ENCODE measurements at regions of chr20 and their contacts with region 1.

Region 1: DNA sequence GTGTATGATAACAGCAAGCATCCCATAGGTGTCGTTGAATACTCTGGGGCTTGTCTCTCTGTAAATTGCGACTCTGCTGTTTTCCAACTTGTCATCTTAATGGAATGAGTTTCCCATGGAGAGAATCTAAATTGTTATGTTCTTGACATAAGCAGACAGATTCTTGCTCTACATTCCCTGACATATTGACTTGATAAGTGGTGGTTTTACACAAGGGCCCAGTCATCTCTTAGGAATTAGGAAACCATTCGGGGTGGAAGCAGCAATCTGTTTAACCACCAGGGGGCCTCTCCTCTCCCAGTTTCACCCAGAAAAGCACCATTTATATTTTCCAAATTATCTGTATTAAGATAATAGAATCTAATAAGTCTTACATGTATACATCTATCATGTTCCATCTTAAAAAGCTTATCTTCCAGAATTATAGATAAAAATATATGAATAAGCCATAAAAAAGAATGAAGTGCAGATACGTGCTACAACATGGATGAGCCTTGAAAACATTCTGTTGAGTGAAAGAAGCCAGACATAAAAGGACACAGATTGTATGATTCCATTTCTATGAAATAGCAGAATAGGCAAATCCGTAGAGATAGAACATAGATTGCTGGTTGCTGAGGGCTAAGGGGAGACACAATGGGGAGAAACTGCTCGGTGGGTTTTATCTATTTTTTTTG is 23.1 kb upstream of the MROH8 start:
- DNase-seq: peak; percentile 96
- H3K4me3 ChIP-seq: peak overlapping the region; percentile 47
- CTCF ChIP-seq: peak; percentile 70

Region 2: GRCh38 chr20:37223053-37223452 is 20.6 kb after region 1 on chr20:
- CTCF ChIA-PET with region 1: interaction called, 10 read pairs
- POLR2A ChIA-PET with region 1: no interaction called
- DNase-seq: peak; percentile 80
- H3K4me3 ChIP-seq: no peak overlapping the region
- CTCF ChIP-seq: no peak

Region 3: DNA sequence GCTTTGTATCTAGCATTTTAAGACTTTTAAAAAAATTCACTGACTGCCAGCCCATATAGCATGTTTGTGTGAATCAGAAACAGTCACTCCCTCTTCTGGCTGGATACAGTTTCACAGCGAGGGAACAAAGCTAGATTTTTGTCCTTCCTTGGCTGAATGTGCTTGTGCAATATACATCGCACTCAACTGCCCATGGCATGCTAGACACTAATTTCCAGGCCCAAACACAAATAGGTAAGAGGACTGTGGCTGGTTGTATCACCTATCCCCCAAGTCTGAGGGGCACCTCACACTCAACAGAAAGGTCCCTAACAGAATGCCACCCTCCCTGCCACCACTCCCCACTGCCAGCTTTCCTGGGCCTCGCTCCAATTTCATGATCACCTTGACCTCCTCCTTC is 341.4 kb after region 1 on chr20:
- CTCF ChIA-PET with region 1: interaction called, 11 read pairs
- POLR2A ChIA-PET with region 1: no interaction called
- DNase-seq: no peak
- H3K4me3 ChIP-seq: no peak overlapping the region
- CTCF ChIP-seq: peak; percentile 53

Measured in AG04449 (cell line).